ENCODE measurements at regions of chr21 and their contacts with region 1.

Region 1: DNA sequence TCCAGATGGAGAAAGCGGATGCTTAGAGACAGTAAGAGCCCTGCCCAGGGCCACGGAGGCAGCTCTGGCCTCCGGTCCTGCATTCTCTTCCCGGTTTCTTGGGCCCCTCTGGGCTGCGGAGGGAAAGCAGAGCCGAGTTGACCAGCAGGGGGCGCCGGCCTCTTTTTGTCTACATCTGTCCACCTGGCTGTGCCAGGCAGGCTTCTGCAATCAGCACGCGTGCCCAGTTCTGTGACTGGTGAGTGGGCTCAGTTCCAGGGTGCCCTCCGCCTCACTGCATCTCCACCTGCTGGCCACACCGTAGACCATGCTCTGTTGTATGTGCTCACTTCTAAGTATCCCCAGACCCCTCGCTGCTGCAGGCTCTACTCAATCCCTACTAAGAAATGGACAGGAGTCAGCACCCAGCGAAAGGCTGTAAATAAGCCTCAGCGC is 6.7 kb upstream of the HUNK start:
- DNase-seq: peak; percentile 86
- H3K4me3 ChIP-seq: no peak overlapping the region; a peak in 1 of 4 replicates
- H3K27ac ChIP-seq: no peak overlapping the region
- H3K4me1 ChIP-seq: peaks cover 0 to 6% of the 10 kb centered on the region in 2 experiments; a peak in 1 of 4 replicates
- H3K27me3 ChIP-seq: no peaks in the 10 kb centered on the region; the same call in none of the 2 replicates
- CTCF ChIP-seq: peak; percentile 85
- EP300 ChIP-seq: no peak
- RAD21 ChIP-seq: peak; percentile 79

Region 2: GRCh38 chr21:31659536-31660258 is 206.4 kb before region 1 on chr21 and contains the start of gene SOD1:
- CTCF ChIA-PET with region 1: no interaction called
- POLR2A ChIA-PET with region 1: no interaction called
- DNase-seq: peak; percentile 99
- H3K4me3 ChIP-seq: peak within 1 kb of the TSS; percentile 77 to 88
- H3K27ac ChIP-seq: peak within 1 kb of the TSS; percentile 86 to 95
- H3K4me1 ChIP-seq: peaks cover 2 to 9% of the 10 kb centered on the region in 2 experiments; a peak in 3 of 4 replicates
- H3K27me3 ChIP-seq: no peaks in the 10 kb centered on the region
- CTCF ChIP-seq: no peak
- EP300 ChIP-seq: no peak
- RAD21 ChIP-seq: no peak
- polyA plus RNA-seq, gene SOD1: 507 and 572 TPM in 2 replicates

Region 3: DNA sequence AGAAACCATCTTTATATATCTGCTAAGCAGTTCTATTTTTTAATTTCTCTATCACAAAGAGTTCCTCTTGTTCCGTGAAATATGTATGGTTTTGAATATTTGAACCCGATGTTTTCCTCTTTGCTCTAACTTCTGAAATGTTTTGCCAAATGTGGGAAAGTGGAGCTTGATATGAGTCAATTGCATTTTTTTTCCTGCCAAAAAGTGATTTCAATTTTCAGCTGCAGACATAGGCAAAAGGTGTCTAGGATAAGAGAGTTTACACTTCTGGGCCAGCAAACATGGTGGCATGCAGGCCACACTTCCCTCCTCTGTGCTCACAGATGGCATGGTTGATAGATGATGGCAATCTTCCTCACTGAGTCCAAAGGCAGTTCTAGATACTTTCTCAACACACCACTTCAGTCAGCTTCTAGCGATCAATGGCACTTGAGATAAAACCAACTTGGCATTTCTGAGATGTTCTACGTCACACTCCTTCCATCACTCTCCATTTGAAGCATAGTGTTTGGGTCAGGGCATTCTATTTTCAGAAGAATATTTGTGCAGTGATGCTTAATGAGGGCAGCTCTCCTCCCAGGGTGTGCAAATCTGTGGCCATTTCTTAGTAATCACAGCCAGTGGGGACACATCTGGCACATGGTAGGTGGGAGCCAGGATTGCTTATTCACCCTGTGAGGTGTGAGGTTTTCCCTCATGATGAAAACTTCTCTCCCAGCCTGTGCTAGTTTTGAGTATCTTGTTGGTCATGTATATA is 79.8 kb before region 1 on chr21:
- CTCF ChIA-PET with region 1: interaction called, 18 read pairs
- POLR2A ChIA-PET with region 1: no interaction called
- DNase-seq: no peak
- H3K4me3 ChIP-seq: peak overlapping the region in 1 of 2 experiments; percentile 32; a peak in 1 of 4 replicates
- H3K27ac ChIP-seq: no peak overlapping the region
- H3K4me1 ChIP-seq: no peaks in the 10 kb centered on the region; a peak in 1 of 4 replicates
- H3K27me3 ChIP-seq: no peaks in the 10 kb centered on the region
- CTCF ChIP-seq: no peak; the same call in 1 of the 2 replicates
- EP300 ChIP-seq: no peak
- RAD21 ChIP-seq: no peak

Region 4: DNA sequence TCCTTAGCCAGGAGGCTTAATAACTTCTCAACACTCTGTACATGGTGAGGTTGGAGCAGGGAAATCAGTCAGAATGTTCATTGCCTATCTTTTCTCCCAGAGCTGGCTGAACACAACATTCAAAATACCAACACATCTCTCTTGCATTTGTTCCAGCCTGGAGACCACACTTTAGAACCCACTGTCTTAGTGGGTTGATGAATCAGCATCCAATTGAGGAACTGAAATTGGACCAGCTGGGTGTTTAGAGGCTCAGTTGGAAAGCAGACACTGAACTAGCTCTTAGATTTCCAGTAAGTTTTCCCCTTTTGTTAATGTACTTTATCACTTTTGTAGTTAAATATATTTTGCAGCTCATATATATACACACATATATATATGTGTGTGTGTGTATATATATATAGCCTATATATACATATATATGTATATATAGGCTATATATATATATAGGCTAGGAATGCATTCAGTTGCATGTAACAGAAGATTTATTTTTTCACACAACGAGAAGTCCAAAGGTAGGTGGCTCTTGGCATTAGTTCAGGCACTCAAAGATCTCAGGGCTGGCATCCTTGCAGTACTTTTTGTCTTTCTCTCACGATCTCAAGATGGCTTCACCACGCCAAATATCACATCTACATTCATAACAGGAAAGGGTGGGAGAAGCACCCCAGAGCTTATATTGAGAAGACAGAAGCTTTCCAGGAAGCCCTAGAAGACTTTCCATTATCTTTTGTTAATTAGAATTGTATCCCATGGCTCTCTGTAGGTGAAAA is 28.3 kb before region 1 on chr21:
- CTCF ChIA-PET with region 1: interaction called, 16 read pairs
- POLR2A ChIA-PET with region 1: no interaction called
- DNase-seq: no peak
- H3K4me3 ChIP-seq: no peak overlapping the region
- H3K27ac ChIP-seq: no peak overlapping the region
- H3K4me1 ChIP-seq: no peaks in the 10 kb centered on the region
- H3K27me3 ChIP-seq: no peaks in the 10 kb centered on the region
- CTCF ChIP-seq: no peak
- EP300 ChIP-seq: no peak
- RAD21 ChIP-seq: no peak

Region 5: GRCh38 chr21:31846690-31847089 is 19.4 kb before region 1 on chr21:
- CTCF ChIA-PET with region 1: interaction called, 11 read pairs
- POLR2A ChIA-PET with region 1: no interaction called
- DNase-seq: no peak
- H3K4me3 ChIP-seq: no peak overlapping the region
- H3K27ac ChIP-seq: no peak overlapping the region
- H3K4me1 ChIP-seq: no peaks in the 10 kb centered on the region
- H3K27me3 ChIP-seq: peaks cover 7% of the 10 kb centered on the region
- CTCF ChIP-seq: no peak
- EP300 ChIP-seq: no peak
- RAD21 ChIP-seq: no peak

Region 6: DNA sequence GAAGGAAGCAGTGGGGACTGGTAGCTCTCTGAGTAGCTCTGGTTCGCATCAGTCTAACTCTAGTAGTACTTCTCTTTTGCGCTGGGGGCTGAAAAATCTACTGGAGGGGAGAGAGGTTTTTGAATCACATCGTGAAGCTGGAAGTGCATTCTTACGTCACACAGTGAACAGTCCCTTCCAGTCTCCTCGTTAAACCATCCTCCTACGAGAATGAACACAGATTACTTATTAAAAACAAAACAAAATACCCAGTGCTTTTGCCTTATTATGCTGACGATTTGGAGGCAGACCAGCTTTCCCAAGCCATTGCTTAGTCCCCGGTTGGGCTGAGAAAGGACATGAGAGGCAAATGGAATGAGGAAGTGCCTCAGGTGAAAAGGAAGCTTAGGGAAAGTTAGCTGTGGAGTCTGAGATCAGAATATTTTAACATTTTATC is 22.9 kb after region 1 on chr21:
- CTCF ChIA-PET with region 1: interaction called, 13 read pairs
- POLR2A ChIA-PET with region 1: no interaction called
- DNase-seq: peak; percentile 43
- H3K4me3 ChIP-seq: no peak overlapping the region; a peak in 1 of 4 replicates
- H3K27ac ChIP-seq: peak overlapping the region; percentile 15 to 48; a peak in 3 of 4 replicates
- H3K4me1 ChIP-seq: peaks cover 0 to 8% of the 10 kb centered on the region in 2 experiments; a peak in 2 of 4 replicates
- H3K27me3 ChIP-seq: no peaks in the 10 kb centered on the region
- CTCF ChIP-seq: no peak
- EP300 ChIP-seq: no peak
- RAD21 ChIP-seq: no peak

Region 7: GRCh38 chr21:31894457-31894856 is 28.4 kb after region 1 on chr21:
- CTCF ChIA-PET with region 1: interaction called, 13 read pairs
- POLR2A ChIA-PET with region 1: no interaction called
- DNase-seq: peak; percentile 44
- H3K4me3 ChIP-seq: no peak overlapping the region
- H3K27ac ChIP-seq: peak overlapping the region in 1 of 2 experiments; percentile 82; a peak in 2 of 4 replicates
- H3K4me1 ChIP-seq: peaks cover 0 to 15% of the 10 kb centered on the region in 2 experiments; a peak in 2 of 4 replicates
- H3K27me3 ChIP-seq: no peaks in the 10 kb centered on the region
- CTCF ChIP-seq: no peak
- EP300 ChIP-seq: peak in 1 of 2 experiments; percentile 41; a peak in 1 of 4 replicates
- RAD21 ChIP-seq: no peak

Region 8: GRCh38 chr21:31903896-31904295 is 37.8 kb after region 1 on chr21:
- CTCF ChIA-PET with region 1: interaction called, 10 read pairs
- POLR2A ChIA-PET with region 1: no interaction called
- DNase-seq: no peak
- H3K4me3 ChIP-seq: no peak overlapping the region
- H3K27ac ChIP-seq: no peak overlapping the region
- H3K4me1 ChIP-seq: peaks cover 0 to 13% of the 10 kb centered on the region in 2 experiments; a peak in 2 of 4 replicates
- H3K27me3 ChIP-seq: no peaks in the 10 kb centered on the region
- CTCF ChIP-seq: no peak
- EP300 ChIP-seq: no peak
- RAD21 ChIP-seq: no peak

Region 9: GRCh38 chr21:33348706-33349105 is 1482.6 kb after region 1 on chr21:
- CTCF ChIA-PET with region 1: no interaction called
- POLR2A ChIA-PET with region 1: no interaction called
- DNase-seq: no peak
- H3K4me3 ChIP-seq: no peak overlapping the region
- H3K27ac ChIP-seq: no peak overlapping the region
- H3K4me1 ChIP-seq: no peaks in the 10 kb centered on the region
- H3K27me3 ChIP-seq: no peaks in the 10 kb centered on the region
- CTCF ChIP-seq: no peak
- EP300 ChIP-seq: no peak
- RAD21 ChIP-seq: no peak

Measured in SK-N-SH (cell line).